Common myeloid progenitor, CD34-positive (primary cell): ENCODE measurements at regions of chr20 and their contacts with region 1.

Region 1: GRCh38 chr20:13800728-13801134 is 15.9 kb downstream of the NDUFAF5 start:
- DNase-seq: no peak
- H3K4me3 ChIP-seq: no peak overlapping the region
- H3K27ac ChIP-seq: no peak overlapping the region
- H3K4me1 ChIP-seq: no peaks in the 10 kb centered on the region
- H3K27me3 ChIP-seq: no peaks in the 10 kb centered on the region

Region 2: DNA sequence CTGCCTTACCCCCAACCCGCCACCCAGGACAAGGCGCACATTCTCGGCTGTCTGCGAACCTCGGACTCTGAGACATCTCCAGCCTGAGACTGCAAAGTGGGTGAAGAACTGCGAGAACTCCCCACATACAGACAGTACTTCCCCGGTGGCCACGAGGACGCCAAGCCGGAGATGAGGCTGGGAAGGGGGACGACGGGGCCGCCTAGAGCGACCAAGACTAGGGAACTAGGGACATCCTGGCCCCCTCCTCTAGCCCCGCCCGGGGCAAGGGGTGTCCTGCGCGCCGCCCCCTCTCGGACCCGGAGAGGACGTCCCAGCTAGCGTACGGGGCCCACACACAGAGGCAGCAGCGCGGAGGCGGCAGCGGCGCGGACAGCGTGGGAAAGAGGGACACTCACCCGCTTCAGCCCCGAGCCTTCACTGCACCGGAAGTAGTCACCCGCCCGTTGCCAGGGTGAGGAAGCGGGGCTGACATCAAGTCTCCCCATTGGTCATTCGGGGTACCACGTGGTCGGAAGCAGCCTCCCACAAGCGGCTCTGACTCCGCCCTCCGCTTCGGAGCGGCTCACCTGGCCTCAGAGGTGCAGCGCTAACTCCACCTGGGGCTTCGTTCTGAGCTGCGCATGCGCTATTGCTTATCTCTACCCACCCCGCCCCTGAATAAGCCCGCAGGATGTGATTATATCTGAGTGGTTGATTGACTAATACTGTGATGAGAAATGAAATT is 162.1 kb before region 1 on chr20 and contains the start of gene TASP1:
- CTCF ChIA-PET with region 1: no interaction called
- POLR2A ChIA-PET with region 1: no interaction called
- DNase-seq: peak; percentile 95 to 98 (median 98)
- H3K4me3 ChIP-seq: peak within 1 kb of the TSS; percentile 78 to 98 (median 88)
- H3K27ac ChIP-seq: peak within 1 kb of the TSS; percentile 68 to 87
- H3K4me1 ChIP-seq: peaks cover 0 to 17% (median 9%) of the 10 kb centered on the region in 4 experiments
- H3K27me3 ChIP-seq: peaks cover 0 to 20% (median 3%) of the 10 kb centered on the region in 5 experiments

Region 3: DNA sequence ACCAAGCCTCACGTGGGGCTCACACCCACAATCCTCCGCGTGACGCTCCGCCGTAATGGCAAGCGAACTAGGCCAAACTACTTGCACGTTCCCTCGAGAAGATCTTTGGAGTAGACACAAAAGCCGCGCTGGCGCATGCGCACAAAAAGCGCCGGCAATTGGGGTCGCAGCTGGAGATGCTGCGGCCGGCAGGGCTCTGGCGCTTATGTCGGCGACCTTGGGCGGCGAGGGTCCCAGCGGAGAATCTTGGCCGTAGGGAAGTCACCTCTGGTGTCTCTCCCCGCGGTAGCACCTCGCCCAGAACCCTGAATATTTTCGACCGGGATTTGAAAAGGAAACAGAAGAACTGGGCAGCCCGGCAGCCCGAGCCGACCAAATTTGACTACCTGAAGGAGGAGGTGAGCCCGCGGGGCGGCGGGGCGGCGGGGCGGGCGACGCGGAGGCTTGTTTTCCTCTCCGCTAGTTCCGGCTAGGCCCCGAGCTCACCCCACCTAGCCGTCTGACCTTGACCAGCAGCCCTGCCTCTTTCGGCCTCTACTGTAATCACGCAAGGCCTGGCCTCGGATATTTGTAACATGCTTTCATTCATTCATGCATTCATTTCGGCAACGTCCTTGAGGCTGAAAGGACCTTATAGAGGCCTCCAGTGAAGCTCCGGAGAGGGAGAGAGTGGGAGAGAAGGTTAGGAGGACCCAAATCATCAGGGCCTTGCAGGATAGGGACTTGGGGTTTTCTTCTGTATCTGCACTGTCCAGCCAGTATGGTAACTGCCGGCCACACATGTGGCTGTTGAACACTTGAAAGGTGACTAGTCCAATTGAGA is 15.6 kb before region 1 on chr20 and contains the starts of genes ESF1 and NDUFAF5:
- CTCF ChIA-PET with region 1: interaction called, 14 read pairs
- POLR2A ChIA-PET with region 1: interaction called, 7 read pairs
- DNase-seq: peak; percentile 97 to 98 (median 97)
- H3K4me3 ChIP-seq: peak within 1 kb of the TSS; percentile 84 to 99 (median 89)
- H3K27ac ChIP-seq: peak within 1 kb of the TSS; percentile 50 to 90
- H3K4me1 ChIP-seq: peaks cover 16 to 25% (median 21%) of the 10 kb centered on the region in 4 experiments
- H3K27me3 ChIP-seq: no peaks in the 10 kb centered on the region